K562 (cell line): ENCODE measurements at regions of chr14 and their contacts with region 1.

Region 1: DNA sequence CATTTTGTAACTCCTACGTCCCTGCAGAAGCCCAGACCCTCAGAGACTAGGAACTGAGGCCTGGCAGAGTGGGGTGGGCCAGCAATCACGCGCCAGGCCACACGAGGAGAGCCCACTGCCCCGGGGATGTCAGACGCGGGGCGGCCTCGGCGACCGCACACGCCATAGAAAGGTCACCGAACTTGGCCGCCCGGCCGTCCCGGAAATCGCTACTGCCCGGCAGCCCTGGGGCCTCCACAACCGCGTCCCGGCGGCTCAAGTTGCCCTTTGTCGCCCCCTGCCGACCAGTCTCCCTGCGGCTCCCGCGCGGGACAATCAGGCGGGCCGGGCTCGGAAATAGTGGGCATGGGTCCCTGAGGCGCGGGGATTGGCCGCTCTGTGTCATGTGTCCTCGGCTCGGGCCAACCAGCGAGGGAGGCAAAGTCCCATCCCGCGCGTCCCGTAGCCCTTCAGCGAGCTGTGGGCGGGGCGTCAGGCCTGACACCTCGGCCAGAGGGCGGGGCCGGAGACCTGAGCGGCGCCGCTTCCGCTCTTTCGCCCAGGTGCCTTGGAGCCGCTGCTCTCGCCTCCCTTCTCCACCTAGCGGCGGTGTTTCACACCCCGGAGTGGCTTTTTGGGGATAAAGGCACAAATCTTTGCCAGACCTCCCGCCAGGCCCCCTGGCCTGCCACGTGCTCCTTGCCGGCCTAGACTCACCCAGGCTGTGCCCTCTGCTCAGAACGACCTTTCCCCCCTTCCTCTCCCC is 33.4 kb upstream of the DEGS2 start:
- DNase-seq: peak; percentile 97 to 98 (median 97)
- ATAC-seq: peak; percentile 99
- H3K4me3 ChIP-seq: peak overlapping the region; percentile 20; the same call in 1 of the 2 replicates
- H3K27ac ChIP-seq: peak overlapping the region; percentile 95
- H3K4me1 ChIP-seq: peaks cover 15 to 17% of the 10 kb centered on the region in 2 experiments; a peak in 4 of 5 replicates
- H3K27me3 ChIP-seq: no peaks in the 10 kb centered on the region
- CTCF ChIP-seq: peak; percentile 81 to 84 (median 82)
- EP300 ChIP-seq: no peak
- POLR2A ChIP-seq: peak; percentile 57
- RAD21 ChIP-seq: peak; percentile 85 to 90

Region 2: DNA sequence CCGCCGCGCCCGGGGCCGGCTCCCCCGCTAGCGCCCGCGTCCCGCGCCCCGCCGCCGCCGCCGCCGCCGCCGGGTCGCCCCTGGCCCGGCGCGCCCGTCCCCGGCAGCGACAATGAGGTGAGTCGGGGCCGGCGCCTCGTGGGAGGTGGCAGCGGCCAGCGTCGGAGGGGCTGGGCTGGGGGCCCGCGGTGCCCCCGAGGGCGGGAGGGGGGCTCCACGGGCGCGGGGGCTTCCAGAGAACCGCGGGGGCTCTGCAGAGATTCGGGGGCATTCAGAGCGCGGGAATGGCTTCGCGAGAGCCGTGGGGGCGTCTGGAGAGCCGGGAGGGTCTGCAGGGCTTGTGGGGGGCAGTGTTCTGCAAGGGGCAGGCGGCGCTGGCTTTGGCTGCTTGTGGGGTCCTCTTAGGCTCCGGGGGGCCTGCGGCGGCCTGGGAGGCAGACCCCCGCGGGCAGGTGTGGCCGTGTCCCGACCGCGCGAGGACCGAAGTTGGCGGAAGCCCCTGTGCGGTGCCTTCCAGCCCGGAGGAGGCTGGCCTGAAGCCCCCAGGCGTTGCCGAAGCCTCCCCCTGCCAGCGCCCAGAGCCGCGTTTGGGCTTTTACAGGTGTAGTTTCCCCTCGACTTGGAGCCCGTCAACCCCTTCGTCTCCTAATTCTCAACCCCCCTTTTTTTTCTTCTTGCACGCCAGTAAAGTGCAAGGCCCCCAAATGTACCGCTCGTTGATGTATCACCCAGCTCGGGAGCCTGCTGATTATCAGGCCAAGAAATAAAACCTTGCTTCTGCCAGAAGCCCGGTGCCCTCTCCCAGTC is 220.7 kb before region 1 on chr14:
- CTCF ChIA-PET with region 1: no interaction called
- POLR2A ChIA-PET with region 1: no interaction called
- in situ Hi-C with region 1: no loop called
- intact Hi-C with region 1: loop called (anchors 2 kb)
- DNase-seq: peak in 3 of 4 experiments; percentile 14 to 42 (median 19)
- ATAC-seq: peak; percentile 57
- H3K4me3 ChIP-seq: peak overlapping the region; percentile 76
- H3K27ac ChIP-seq: peak overlapping the region; percentile 71
- H3K4me1 ChIP-seq: peaks cover 0 to 8% of the 10 kb centered on the region in 2 experiments; a peak in 2 of 5 replicates
- H3K27me3 ChIP-seq: peaks cover 2 to 16% of the 10 kb centered on the region in 2 experiments; a peak in 3 of 5 replicates
- CTCF ChIP-seq: no peak
- EP300 ChIP-seq: no peak
- POLR2A ChIP-seq: no peak
- RAD21 ChIP-seq: no peak

Region 3: DNA sequence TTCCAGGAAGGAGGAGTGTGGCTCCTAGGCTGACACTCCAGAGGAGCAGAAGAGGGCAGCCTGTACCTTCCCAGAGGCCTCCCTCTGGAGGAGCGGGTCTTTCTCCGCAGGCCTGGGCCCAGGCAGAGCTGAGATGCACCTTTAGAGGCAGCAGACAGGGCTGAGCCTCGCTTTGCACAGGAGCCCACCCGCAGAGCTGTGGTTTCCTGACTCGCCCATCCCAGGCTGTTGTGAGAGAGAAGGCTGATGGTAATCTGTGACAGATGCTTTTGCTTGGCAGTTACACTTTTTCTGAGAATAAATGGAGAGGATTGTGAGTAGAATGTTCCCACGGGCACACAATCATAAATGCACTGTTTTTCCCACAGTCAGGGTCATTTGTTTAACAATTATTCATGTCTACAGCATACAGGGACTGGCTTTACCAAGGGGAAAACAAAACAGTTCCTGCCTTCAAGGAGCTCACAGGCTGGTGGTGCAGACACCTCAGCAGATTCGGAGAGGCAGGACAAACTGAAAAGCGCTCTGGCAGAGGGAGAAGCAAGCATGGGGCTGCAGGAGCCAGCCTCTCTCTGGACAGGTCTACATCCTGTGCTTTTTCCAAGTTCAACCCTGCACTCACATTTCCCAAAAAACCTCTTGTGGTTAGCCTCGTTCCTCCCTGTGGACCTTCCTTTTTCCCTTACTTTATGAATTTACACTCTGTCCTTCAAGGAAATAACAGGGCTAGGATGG is 113.7 kb before region 1 on chr14:
- CTCF ChIA-PET with region 1: no interaction called
- POLR2A ChIA-PET with region 1: no interaction called
- in situ Hi-C with region 1: no loop called
- intact Hi-C with region 1: loop called (anchors 2 kb)
- DNase-seq: peak; percentile 12 to 76 (median 36)
- ATAC-seq: peak; percentile 89
- H3K4me3 ChIP-seq: no peak overlapping the region
- H3K27ac ChIP-seq: peak overlapping the region; percentile 6; the same call in 2 of the 3 replicates
- H3K4me1 ChIP-seq: peaks cover 31 to 39% of the 10 kb centered on the region in 2 experiments
- H3K27me3 ChIP-seq: no peaks in the 10 kb centered on the region
- CTCF ChIP-seq: peak in 2 of 3 experiments; percentile 48 to 64; a peak in 4 of 6 replicates
- EP300 ChIP-seq: no peak
- POLR2A ChIP-seq: no peak
- RAD21 ChIP-seq: peak; percentile 40 to 58

Region 4: DNA sequence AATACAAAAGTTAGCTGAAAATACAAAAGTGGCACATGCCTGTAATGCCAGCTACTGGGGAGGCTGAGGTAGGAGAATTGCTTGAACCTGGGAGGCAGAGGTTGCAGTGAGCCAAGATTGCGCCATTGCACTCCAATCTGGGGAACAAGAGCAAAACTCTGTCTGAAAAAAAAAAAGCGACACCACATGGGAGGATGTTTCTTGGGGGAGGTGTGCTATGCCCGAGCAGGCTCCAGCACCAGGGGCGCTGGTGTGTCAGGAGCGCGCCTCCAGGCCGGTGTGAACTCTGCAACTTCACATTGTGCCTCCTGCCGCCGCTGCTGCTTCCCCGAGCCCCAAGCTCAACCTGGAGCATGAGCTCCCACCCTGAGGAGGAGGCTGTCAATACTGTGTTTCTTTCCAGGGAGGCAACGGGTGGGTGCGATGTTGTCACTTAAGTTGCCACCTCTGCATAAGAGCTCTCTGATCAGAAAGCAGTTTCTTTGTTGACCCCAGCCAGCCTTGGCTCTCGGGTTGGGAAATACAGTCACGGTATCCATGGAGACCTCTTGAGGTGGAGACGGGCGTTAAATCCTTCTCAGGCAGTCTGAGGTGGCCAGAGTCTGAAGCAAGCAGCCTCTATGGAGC is 52.3 kb before region 1 on chr14:
- CTCF ChIA-PET with region 1: interaction called, 16 read pairs
- POLR2A ChIA-PET with region 1: interaction called, 7 read pairs
- in situ Hi-C with region 1: no loop called
- intact Hi-C with region 1: loop called (anchors 1 kb)
- DNase-seq: peak; percentile 71 to 89 (median 78)
- ATAC-seq: peak; percentile 79
- H3K4me3 ChIP-seq: peak overlapping the region; percentile 28; the same call in 1 of the 2 replicates
- H3K27ac ChIP-seq: peak overlapping the region; percentile 98
- H3K4me1 ChIP-seq: peaks cover 36 to 71% of the 10 kb centered on the region in 2 experiments
- H3K27me3 ChIP-seq: no peaks in the 10 kb centered on the region
- CTCF ChIP-seq: peak; percentile 79 to 97 (median 88)
- EP300 ChIP-seq: peak; percentile 19; the same call in 1 of the 2 replicates
- POLR2A ChIP-seq: peak; percentile 41; the same call in 1 of the 2 replicates
- RAD21 ChIP-seq: peak; percentile 33 to 61

Region 5: GRCh38 chr14:100375963-100376735 is 183.3 kb after region 1 on chr14:
- CTCF ChIA-PET with region 1: no interaction called
- POLR2A ChIA-PET with region 1: no interaction called
- in situ Hi-C with region 1: no loop called
- intact Hi-C with region 1: loop called (anchors 2 kb)
- DNase-seq: peak; percentile 84 to 95 (median 87)
- ATAC-seq: peak; percentile 86
- H3K4me3 ChIP-seq: peak within 1 kb of the TSS; percentile 81
- H3K27ac ChIP-seq: peak within 1 kb of the TSS; percentile 100
- H3K4me1 ChIP-seq: peaks cover 15 to 20% of the 10 kb centered on the region in 2 experiments; a peak in 4 of 5 replicates
- H3K27me3 ChIP-seq: no peaks in the 10 kb centered on the region
- CTCF ChIP-seq: no peak
- EP300 ChIP-seq: no peak
- POLR2A ChIP-seq: peak; percentile 83
- RAD21 ChIP-seq: no peak